H1 (cell line): ENCODE measurements at regions of chr10 and their contacts with region 1.

Region 1: GRCh38 chr10:100827819-100828737 is 82.7 kb downstream of the PAX2 start:
- DNase-seq: peak in 1 of 2 experiments; percentile 74
- H3K4me3 ChIP-seq: peak overlapping the region in 3 of 4 experiments; percentile 26 to 53 (median 28); a peak in 5 of 8 replicates
- H3K27ac ChIP-seq: no peak overlapping the region
- H3K4me1 ChIP-seq: peaks cover 4 to 26% (median 20%) of the 10 kb centered on the region in 4 experiments
- H3K27me3 ChIP-seq: peaks cover 96 to 100% (median 100%) of the 10 kb centered on the region in 4 experiments
- CTCF ChIP-seq: peak in 1 of 3 experiments; percentile 42; a peak in 2 of 4 replicates
- EP300 ChIP-seq: no peak
- POLR2A ChIP-seq: no peak
- RAD21 ChIP-seq: peak; percentile 12 to 52; a peak in 3 of 4 replicates

Region 2: GRCh38 chr10:100749309-100750217 is 78.5 kb before region 1 on chr10:
- CTCF ChIA-PET with region 1: interaction called, 34 read pairs
- POLR2A ChIA-PET with region 1: interaction called, 12 read pairs
- DNase-seq: peak in 1 of 2 experiments; percentile 55
- H3K4me3 ChIP-seq: no peak overlapping the region
- H3K27ac ChIP-seq: no peak overlapping the region
- H3K4me1 ChIP-seq: peaks cover 0 to 14% (median 7%) of the 10 kb centered on the region in 4 experiments; a peak in 6 of 7 replicates
- H3K27me3 ChIP-seq: peaks cover 83 to 94% (median 92%) of the 10 kb centered on the region in 4 experiments
- CTCF ChIP-seq: no peak
- EP300 ChIP-seq: no peak
- POLR2A ChIP-seq: no peak
- RAD21 ChIP-seq: no peak

Region 3: GRCh38 chr10:100928039-100928438 is 100.0 kb after region 1 on chr10:
- CTCF ChIA-PET with region 1: no interaction called
- POLR2A ChIA-PET with region 1: no interaction called
- DNase-seq: no peak
- H3K4me3 ChIP-seq: no peak overlapping the region
- H3K27ac ChIP-seq: no peak overlapping the region
- H3K4me1 ChIP-seq: no peaks in the 10 kb centered on the region
- H3K27me3 ChIP-seq: no peaks in the 10 kb centered on the region
- CTCF ChIP-seq: no peak
- EP300 ChIP-seq: no peak
- POLR2A ChIP-seq: no peak
- RAD21 ChIP-seq: no peak